ENCODE measurements at regions of chr4 and their contacts with region 1.

Region 1: DNA sequence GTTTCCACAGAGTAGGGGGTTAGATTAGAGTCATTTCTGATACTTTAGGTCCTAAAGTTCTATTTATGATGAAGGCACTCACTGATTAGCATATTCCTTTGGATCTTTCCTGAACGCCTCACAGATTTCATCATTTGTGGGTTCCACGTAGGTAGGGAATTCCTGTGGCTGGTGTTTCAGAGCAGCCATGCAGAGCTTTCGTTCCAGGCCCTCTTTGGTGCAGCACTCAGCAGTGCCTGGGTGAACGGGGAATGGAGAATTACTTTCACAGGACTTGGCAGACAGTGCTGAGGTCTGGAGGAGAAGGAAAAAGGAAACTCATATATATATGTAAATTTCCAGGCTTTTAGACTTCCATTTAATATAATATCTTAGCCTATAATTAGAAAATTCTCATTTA is 18.5 kb downstream of the GC start:
- DNase-seq: no peak
- ATAC-seq: no peak
- H3K4me3 Mint-ChIP-seq: no peak overlapping the region
- H3K27ac Mint-ChIP-seq: no peak overlapping the region
- H3K4me1 Mint-ChIP-seq: no peaks in the 10 kb centered on the region
- H3K27me3 Mint-ChIP-seq: no peaks in the 10 kb centered on the region
- CTCF ChIP-seq: no peak

Region 2: GRCh38 chr4:71389149-71389827 is 376.1 kb before region 1 on chr4:
- CTCF ChIA-PET with region 1: no interaction called
- POLR2A ChIA-PET with region 1: no interaction called
- intact Hi-C with region 1: no loop called
- DNase-seq: no peak
- ATAC-seq: no peak
- H3K4me3 Mint-ChIP-seq: no peak overlapping the region
- H3K27ac Mint-ChIP-seq: no peak overlapping the region
- H3K4me1 Mint-ChIP-seq: no peaks in the 10 kb centered on the region
- H3K27me3 Mint-ChIP-seq: peaks cover 13% of the 10 kb centered on the region
- CTCF ChIP-seq: no peak

Region 3: DNA sequence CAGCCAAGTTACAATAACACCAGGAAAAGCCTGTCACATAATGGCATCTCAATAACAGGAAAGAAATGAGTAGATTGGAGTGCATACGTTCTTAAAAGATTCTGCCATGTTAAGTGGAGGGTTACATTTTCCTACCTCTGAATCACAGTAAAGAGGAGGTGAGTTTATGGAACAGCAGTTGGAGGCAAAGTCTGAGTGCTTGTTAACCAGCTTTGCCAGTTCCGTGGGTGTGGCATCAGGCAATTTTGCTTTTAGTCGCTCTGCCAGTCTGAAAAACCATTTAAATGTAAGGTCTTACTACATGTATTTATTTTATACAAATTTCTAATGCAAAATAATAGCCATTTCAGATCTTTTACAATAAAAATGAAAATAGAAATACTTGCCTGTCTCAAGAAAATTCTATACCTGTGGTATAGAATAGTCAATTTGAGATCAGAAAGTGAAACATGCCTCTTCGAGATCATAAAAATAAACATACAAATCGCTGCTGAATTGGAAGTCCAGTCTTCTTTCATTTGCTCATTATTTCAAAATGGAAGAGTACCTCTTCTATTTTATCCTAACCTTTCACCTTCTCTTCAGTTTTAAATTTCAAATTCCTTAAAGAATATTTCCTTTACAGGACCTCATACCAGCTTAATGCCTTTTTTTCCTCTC is 12.8 kb before region 1 on chr4:
- CTCF ChIA-PET with region 1: no interaction called
- POLR2A ChIA-PET with region 1: interaction called, 11 read pairs
- intact Hi-C with region 1: no loop called
- DNase-seq: no peak
- ATAC-seq: no peak
- H3K4me3 Mint-ChIP-seq: no peak overlapping the region
- H3K27ac Mint-ChIP-seq: no peak overlapping the region
- H3K4me1 Mint-ChIP-seq: no peaks in the 10 kb centered on the region
- H3K27me3 Mint-ChIP-seq: no peaks in the 10 kb centered on the region
- CTCF ChIP-seq: no peak

Region 4: GRCh38 chr4:72031868-72032608 is 266.7 kb after region 1 on chr4 and contains the start of gene NPFFR2:
- CTCF ChIA-PET with region 1: no interaction called
- POLR2A ChIA-PET with region 1: no interaction called
- intact Hi-C with region 1: no loop called
- DNase-seq: no peak
- ATAC-seq: no peak
- H3K4me3 Mint-ChIP-seq: no peak within 1 kb of the TSS
- H3K27ac Mint-ChIP-seq: no peak within 1 kb of the TSS
- H3K4me1 Mint-ChIP-seq: no peaks in the 10 kb centered on the region
- H3K27me3 Mint-ChIP-seq: peaks cover 8% of the 10 kb centered on the region
- CTCF ChIP-seq: no peak
- total RNA-seq, gene NPFFR2: not detected in 2 replicates

Measured in activated B cell treated with CpG ODN at 0.5 μM for 24 hours (primary cell).